Ascending aorta (tissue), 2 donors: ENCODE measurements at regions of chr11 and their contacts with region 1.

Region 1: GRCh38 chr11:59668950-59669610 is at the start of gene PATL1:
- DNase-seq: peak; percentile 97 to 100
- H3K4me3 ChIP-seq: peak within 1 kb of the TSS; percentile 91 to 92
- H3K27ac ChIP-seq: peak within 1 kb of the TSS; percentile 94
- H3K4me1 ChIP-seq: peaks cover 0 to 23% of the 10 kb centered on the region in 2 donors
- H3K27me3 ChIP-seq: no peaks in the 10 kb centered on the region
- CTCF ChIP-seq: no peak
- total RNA-seq, gene PATL1: 6.8 TPM

Region 2: DNA sequence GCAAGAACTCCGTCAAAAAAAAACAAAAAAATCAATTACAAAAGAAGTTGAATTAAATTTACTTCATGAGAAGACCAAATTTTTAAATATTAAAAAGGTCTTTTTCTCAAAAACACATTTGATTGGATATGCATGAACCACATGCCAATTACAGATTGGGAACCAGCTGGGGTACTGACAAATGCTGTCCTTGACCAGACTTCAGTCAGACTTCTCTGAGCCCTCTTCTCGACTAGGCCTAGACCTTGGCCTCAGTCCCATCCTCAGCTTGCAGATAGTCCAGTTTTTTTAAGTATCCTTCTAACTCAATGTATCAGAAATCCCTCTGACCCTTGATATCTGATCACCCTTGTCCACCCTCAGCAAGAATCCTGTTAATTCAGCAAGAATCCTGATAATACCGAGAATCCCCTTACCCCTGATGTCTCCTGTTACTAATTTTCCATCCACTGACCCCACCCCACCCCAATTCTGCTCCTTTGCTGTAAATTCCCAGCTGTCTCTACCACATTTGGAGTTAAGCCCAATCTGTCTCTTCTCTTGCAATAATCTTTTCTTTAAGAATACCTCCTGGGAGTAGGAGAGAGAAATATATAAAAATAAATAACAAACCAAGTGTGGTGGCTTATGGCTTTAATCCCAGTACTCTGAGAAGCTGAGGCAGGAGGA is 126.8 kb before region 1 on chr11:
- intact Hi-C with region 1: loop called (anchors 1 kb)
- DNase-seq: no peak
- H3K4me3 ChIP-seq: no peak overlapping the region
- H3K27ac ChIP-seq: no peak overlapping the region
- H3K4me1 ChIP-seq: no peaks in the 10 kb centered on the region
- H3K27me3 ChIP-seq: no peaks in the 10 kb centered on the region
- CTCF ChIP-seq: no peak

Region 3: GRCh38 chr11:59550368-59550841 is 118.7 kb before region 1 on chr11:
- intact Hi-C with region 1: loop called (anchors 1 kb)
- DNase-seq: peak in 1 of 2 donors; percentile 90
- H3K4me3 ChIP-seq: peak overlapping the region; percentile 50 to 71
- H3K27ac ChIP-seq: peak overlapping the region; percentile 84 to 89
- H3K4me1 ChIP-seq: peaks cover 0 to 4% of the 10 kb centered on the region in 2 donors
- H3K27me3 ChIP-seq: no peaks in the 10 kb centered on the region
- CTCF ChIP-seq: peak; percentile 53 to 75 (median 66)

Region 4: DNA sequence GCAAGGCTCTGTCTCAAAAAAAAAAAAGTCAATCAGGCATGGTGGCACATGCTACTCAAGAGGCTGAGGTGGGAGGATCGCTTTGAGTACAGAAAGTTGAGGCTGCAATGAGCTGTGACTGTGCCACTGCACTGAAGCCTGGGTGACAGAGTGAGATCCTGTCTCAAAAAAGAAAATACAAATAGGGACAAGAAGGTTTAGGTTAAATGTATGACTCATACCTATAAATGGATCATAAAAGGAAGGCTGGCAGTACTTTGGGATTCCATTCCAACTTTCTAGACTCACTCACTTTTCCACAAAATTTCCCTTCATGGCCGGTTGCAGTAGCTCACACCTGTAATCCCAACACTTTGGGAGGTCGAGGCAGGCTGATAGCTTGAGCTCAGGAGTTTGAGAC is 27.9 kb before region 1 on chr11:
- intact Hi-C with region 1: no loop called
- DNase-seq: no peak
- H3K4me3 ChIP-seq: no peak overlapping the region
- H3K27ac ChIP-seq: no peak overlapping the region
- H3K4me1 ChIP-seq: no peaks in the 10 kb centered on the region
- H3K27me3 ChIP-seq: no peaks in the 10 kb centered on the region
- CTCF ChIP-seq: no peak

Region 5: GRCh38 chr11:59753650-59754493 is 84.8 kb after region 1 on chr11:
- intact Hi-C with region 1: loop called (anchors 1 kb)
- DNase-seq: peak; percentile 53 to 93
- H3K4me3 ChIP-seq: peak overlapping the region; percentile 89 to 97
- H3K27ac ChIP-seq: peak overlapping the region; percentile 95 to 97
- H3K4me1 ChIP-seq: peaks cover 0 to 9% of the 10 kb centered on the region in 2 donors
- H3K27me3 ChIP-seq: no peaks in the 10 kb centered on the region
- CTCF ChIP-seq: peak; percentile 75 to 91 (median 86)

Region 6: GRCh38 chr11:59802639-59803176 is 133.6 kb after region 1 on chr11:
- intact Hi-C with region 1: loop called (anchors 5 kb)
- DNase-seq: no peak
- H3K4me3 ChIP-seq: no peak overlapping the region
- H3K27ac ChIP-seq: peak overlapping the region; percentile 22 to 68
- H3K4me1 ChIP-seq: peaks cover 0 to 4% of the 10 kb centered on the region in 2 donors
- H3K27me3 ChIP-seq: no peaks in the 10 kb centered on the region
- CTCF ChIP-seq: peak; percentile 51 to 69 (median 68)